Naive thymus-derived CD4-positive, alpha-beta T cell (primary cell): ENCODE measurements at regions of chr1 and their contacts with region 1.

Region 1: GRCh38 chr1:241542199-241542910 is 10.2 kb downstream of the KMO start:
- DNase-seq: no peak
- ATAC-seq: peak; percentile 69
- H3K4me3 ChIP-seq: no peak overlapping the region
- H3K4me3 Mint-ChIP-seq: no peak overlapping the region
- H3K27ac ChIP-seq: no peak overlapping the region
- H3K27ac Mint-ChIP-seq: no peak overlapping the region
- H3K4me1 ChIP-seq: no peaks in the 10 kb centered on the region
- H3K4me1 Mint-ChIP-seq: no peaks in the 10 kb centered on the region
- H3K27me3 ChIP-seq: peaks cover 0 to 3% of the 10 kb centered on the region in 2 donors
- H3K27me3 Mint-ChIP-seq: peaks cover 2 to 24% (median 9%) of the 10 kb centered on the region in 5 donors

Region 2: GRCh38 chr1:241834733-241835377 is 292.5 kb after region 1 on chr1:
- CTCF ChIA-PET with region 1: no interaction called
- POLR2A ChIA-PET with region 1: interaction called, 11 read pairs
- intact Hi-C with region 1: no loop called
- DNase-seq: no peak
- ATAC-seq: no peak
- H3K4me3 ChIP-seq: no peak overlapping the region
- H3K4me3 Mint-ChIP-seq: no peak overlapping the region
- H3K27ac ChIP-seq: no peak overlapping the region
- H3K27ac Mint-ChIP-seq: no peak overlapping the region
- H3K4me1 ChIP-seq: no peaks in the 10 kb centered on the region
- H3K4me1 Mint-ChIP-seq: peaks cover 0 to 2% (median 0%) of the 10 kb centered on the region in 7 donors
- H3K27me3 ChIP-seq: no peaks in the 10 kb centered on the region
- H3K27me3 Mint-ChIP-seq: peaks cover 0 to 29% (median 11%) of the 10 kb centered on the region in 5 donors

Region 3: DNA sequence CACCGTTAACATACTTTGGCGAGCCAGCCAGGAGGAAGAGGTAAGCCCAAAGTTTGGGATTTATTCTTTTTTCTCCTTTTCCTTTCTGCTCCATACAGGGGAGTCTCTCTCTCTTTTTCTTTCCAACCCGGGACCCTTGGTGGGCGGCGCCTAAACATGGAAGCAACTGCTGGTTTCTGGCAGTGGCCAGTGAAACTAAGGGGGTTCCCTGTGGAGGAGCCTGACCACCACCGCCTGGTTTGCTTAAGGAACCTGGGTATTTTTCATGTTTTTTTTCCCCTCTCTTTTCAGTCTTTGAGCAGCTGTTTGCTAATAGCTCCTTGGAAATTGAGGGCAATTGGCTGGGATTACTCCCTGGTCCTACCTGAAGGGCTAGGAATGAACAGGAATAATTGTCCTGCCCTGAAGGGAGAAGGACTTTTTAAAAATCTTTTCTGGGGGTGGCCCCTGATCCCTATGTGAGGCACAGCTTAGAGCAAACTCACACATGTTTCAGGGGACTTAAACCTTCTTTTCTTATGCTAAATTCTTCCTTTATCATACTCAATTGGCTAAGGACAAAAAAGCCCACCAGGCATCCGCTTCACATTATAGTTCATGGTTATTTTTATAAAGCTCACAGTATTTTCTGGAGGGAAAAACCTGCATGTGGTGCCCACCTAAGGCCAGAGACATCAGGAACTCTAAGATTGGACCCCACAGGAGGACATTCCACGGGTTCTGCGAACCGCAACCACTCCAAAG is 1043.4 kb after region 1 on chr1:
- CTCF ChIA-PET with region 1: no interaction called
- POLR2A ChIA-PET with region 1: no interaction called
- intact Hi-C with region 1: no loop called
- DNase-seq: no peak
- ATAC-seq: no peak
- H3K4me3 ChIP-seq: no peak overlapping the region
- H3K4me3 Mint-ChIP-seq: no peak overlapping the region
- H3K27ac ChIP-seq: no peak overlapping the region
- H3K27ac Mint-ChIP-seq: no peak overlapping the region
- H3K4me1 ChIP-seq: no peaks in the 10 kb centered on the region
- H3K4me1 Mint-ChIP-seq: no peaks in the 10 kb centered on the region
- H3K27me3 ChIP-seq: no peaks in the 10 kb centered on the region
- H3K27me3 Mint-ChIP-seq: peaks cover 0 to 15% (median 5%) of the 10 kb centered on the region in 5 donors